ENCODE measurements at regions of chr12 and their contacts with region 1.

Region 1: DNA sequence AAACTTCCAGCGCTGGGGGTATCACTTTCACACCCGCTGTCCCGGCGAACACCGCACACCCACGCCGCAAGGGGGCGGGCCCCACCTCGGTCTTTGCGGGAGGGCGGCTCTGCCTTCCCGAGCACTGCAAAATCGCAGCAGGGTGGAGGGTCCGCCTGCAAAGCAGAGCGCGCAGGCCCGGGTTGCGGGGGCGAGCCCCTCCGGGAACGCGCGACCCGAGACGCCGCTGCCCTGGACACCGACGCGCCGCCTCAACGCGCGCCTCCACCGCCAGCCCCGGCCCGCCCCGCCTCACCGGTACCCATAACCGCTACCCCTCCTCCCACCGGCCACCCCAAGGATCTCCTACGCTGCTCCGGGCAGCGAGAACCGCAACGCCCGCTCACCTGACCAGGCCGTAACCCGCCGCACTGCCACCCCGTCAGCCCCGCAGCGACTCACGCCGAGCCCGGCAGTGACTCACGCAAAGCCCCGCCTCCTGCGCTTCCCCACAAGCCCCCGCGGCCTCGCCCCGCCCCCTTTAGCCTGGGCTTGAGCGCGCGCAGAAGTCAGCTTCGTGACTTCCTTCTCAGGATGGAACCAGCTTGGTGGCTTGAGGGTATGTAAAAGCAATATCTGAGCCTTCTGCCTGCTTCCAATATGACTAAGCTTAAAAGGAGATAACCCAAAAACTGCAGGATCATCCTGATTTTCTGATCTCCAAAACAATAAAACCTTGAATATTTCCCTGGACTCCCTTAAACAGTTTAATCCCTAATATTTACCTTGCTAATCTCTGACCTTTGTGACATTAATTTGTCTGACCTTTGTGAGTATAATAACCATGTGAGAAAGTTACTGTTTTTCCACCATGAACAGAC is at the start of gene RPAP3:
- DNase-seq: peak; percentile 95
- ATAC-seq: peak; percentile 90
- H3K4me3 ChIP-seq: peak within 1 kb of the TSS; percentile 62 to 98 (median 83)
- H3K4me3 Mint-ChIP-seq: peak within 1 kb of the TSS; percentile 93
- H3K27ac ChIP-seq: peak within 1 kb of the TSS; percentile 88
- H3K27ac Mint-ChIP-seq: peak within 1 kb of the TSS; percentile 94
- H3K4me1 ChIP-seq: peaks cover 59 to 61% of the 10 kb centered on the region in 2 donors
- H3K4me1 Mint-ChIP-seq: peaks cover 71% of the 10 kb centered on the region
- H3K27me3 ChIP-seq: no peaks in the 10 kb centered on the region
- H3K27me3 Mint-ChIP-seq: no peaks in the 10 kb centered on the region
- CTCF ChIP-seq: peak; percentile 81
- total RNA-seq, gene RPAP3: 47.2 and 49.4 TPM in 2 replicates

Region 2: GRCh38 chr12:46372544-46373110 is 1333.2 kb before region 1 on chr12 and contains the start of gene SLC38A2:
- CTCF ChIA-PET with region 1: no interaction called
- POLR2A ChIA-PET with region 1: no interaction called
- intact Hi-C with region 1: loop called (anchors 5 kb)
- DNase-seq: peak; percentile 97
- ATAC-seq: peak; percentile 84
- H3K4me3 ChIP-seq: peak within 1 kb of the TSS; percentile 80 to 99 (median 97)
- H3K4me3 Mint-ChIP-seq: peak within 1 kb of the TSS; percentile 98
- H3K27ac ChIP-seq: peak within 1 kb of the TSS; percentile 90 to 91
- H3K27ac Mint-ChIP-seq: peak within 1 kb of the TSS; percentile 99
- H3K4me1 ChIP-seq: peaks cover 39 to 40% of the 10 kb centered on the region in 2 donors
- H3K4me1 Mint-ChIP-seq: peaks cover 45% of the 10 kb centered on the region
- H3K27me3 ChIP-seq: no peaks in the 10 kb centered on the region
- H3K27me3 Mint-ChIP-seq: no peaks in the 10 kb centered on the region
- CTCF ChIP-seq: no peak
- total RNA-seq, gene SLC38A2: 202 TPM in 2 replicates

Region 3: GRCh38 chr12:47367912-47368537 is 337.8 kb before region 1 on chr12:
- CTCF ChIA-PET with region 1: no interaction called
- POLR2A ChIA-PET with region 1: no interaction called
- intact Hi-C with region 1: no loop called
- DNase-seq: no peak
- ATAC-seq: no peak
- H3K4me3 ChIP-seq: peak overlapping the region in 1 of 5 experiments; percentile 5
- H3K4me3 Mint-ChIP-seq: no peak overlapping the region
- H3K27ac ChIP-seq: peak overlapping the region; percentile 7 to 50
- H3K27ac Mint-ChIP-seq: no peak overlapping the region
- H3K4me1 ChIP-seq: peaks cover 38 to 39% of the 10 kb centered on the region in 2 donors
- H3K4me1 Mint-ChIP-seq: peaks cover 8% of the 10 kb centered on the region
- H3K27me3 ChIP-seq: no peaks in the 10 kb centered on the region
- H3K27me3 Mint-ChIP-seq: no peaks in the 10 kb centered on the region
- CTCF ChIP-seq: no peak

Region 4: DNA sequence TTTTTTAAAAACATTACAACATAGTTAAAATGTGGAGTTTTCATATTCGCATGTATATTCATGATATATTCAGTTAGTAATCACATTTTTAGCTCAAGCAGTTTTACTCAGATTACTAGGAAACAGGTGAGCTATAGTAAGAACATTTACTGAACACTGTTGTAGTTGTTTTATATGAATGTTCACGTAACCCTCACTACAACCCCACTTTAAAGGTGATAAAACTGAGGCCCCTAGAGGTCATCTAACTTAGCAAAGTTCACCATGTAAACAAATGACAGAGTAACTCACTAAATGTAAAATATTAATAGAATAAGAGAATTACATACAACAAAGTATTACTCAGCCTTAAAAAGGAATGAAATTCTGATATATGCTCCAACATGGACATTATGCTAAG is 26.0 kb before region 1 on chr12:
- CTCF ChIA-PET with region 1: no interaction called
- POLR2A ChIA-PET with region 1: no interaction called
- intact Hi-C with region 1: no loop called
- DNase-seq: no peak
- ATAC-seq: no peak
- H3K4me3 ChIP-seq: no peak overlapping the region
- H3K4me3 Mint-ChIP-seq: no peak overlapping the region
- H3K27ac ChIP-seq: no peak overlapping the region
- H3K27ac Mint-ChIP-seq: no peak overlapping the region
- H3K4me1 ChIP-seq: no peaks in the 10 kb centered on the region
- H3K4me1 Mint-ChIP-seq: peaks cover 18% of the 10 kb centered on the region
- H3K27me3 ChIP-seq: no peaks in the 10 kb centered on the region
- H3K27me3 Mint-ChIP-seq: no peaks in the 10 kb centered on the region
- CTCF ChIP-seq: no peak

Region 5: GRCh38 chr12:47742253-47742825 is 36.5 kb after region 1 on chr12:
- CTCF ChIA-PET with region 1: interaction called, 270 read pairs
- POLR2A ChIA-PET with region 1: interaction called, 3 read pairs
- intact Hi-C with region 1: loop called (anchors 1 kb)
- DNase-seq: peak; percentile 78
- ATAC-seq: peak; percentile 18
- H3K4me3 ChIP-seq: no peak overlapping the region
- H3K4me3 Mint-ChIP-seq: no peak overlapping the region
- H3K27ac ChIP-seq: no peak overlapping the region
- H3K27ac Mint-ChIP-seq: peak overlapping the region; percentile 75
- H3K4me1 ChIP-seq: peaks cover 43 to 61% of the 10 kb centered on the region in 2 donors
- H3K4me1 Mint-ChIP-seq: peaks cover 65% of the 10 kb centered on the region
- H3K27me3 ChIP-seq: no peaks in the 10 kb centered on the region
- H3K27me3 Mint-ChIP-seq: no peaks in the 10 kb centered on the region
- CTCF ChIP-seq: peak; percentile 98

Region 6: DNA sequence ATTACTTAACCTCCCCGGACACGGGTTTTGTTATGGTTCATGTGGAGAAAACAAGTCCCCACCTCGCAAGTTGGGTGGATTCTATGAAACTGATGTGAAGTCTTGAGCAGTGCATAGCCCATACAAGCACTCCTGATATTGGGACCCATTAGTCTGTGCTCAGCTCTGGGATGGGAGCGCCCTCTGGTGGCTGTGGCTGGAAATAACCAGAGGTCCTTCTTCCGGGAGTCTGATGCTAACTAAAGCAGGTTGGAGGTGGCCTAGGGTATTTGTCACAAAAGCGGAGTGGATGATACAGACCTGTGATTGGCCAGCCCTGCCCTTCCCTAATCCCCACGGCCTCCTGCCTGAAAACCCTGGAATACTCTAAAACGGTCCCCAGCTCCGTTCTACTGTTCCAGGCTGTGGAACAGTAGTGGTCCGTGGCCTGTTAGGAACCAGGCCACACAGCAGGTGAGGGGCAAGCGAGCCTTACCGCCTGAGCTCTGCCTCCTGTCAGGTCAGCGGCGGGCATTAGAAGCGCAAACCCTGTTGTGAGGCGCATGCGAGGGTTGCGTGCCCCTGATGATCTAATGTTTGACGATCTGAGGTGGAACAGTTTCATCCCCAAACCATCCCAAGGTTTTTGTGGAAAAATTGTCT is 73.6 kb after region 1 on chr12:
- CTCF ChIA-PET with region 1: interaction called, 584 read pairs
- POLR2A ChIA-PET with region 1: no interaction called
- intact Hi-C with region 1: no loop called
- DNase-seq: peak; percentile 90
- ATAC-seq: peak; percentile 90
- H3K4me3 ChIP-seq: no peak overlapping the region
- H3K4me3 Mint-ChIP-seq: no peak overlapping the region
- H3K27ac ChIP-seq: no peak overlapping the region
- H3K27ac Mint-ChIP-seq: peak overlapping the region; percentile 80
- H3K4me1 ChIP-seq: peaks cover 0 to 14% of the 10 kb centered on the region in 2 donors
- H3K4me1 Mint-ChIP-seq: peaks cover 23% of the 10 kb centered on the region
- H3K27me3 ChIP-seq: no peaks in the 10 kb centered on the region
- H3K27me3 Mint-ChIP-seq: no peaks in the 10 kb centered on the region
- CTCF ChIP-seq: peak; percentile 92

Region 7: DNA sequence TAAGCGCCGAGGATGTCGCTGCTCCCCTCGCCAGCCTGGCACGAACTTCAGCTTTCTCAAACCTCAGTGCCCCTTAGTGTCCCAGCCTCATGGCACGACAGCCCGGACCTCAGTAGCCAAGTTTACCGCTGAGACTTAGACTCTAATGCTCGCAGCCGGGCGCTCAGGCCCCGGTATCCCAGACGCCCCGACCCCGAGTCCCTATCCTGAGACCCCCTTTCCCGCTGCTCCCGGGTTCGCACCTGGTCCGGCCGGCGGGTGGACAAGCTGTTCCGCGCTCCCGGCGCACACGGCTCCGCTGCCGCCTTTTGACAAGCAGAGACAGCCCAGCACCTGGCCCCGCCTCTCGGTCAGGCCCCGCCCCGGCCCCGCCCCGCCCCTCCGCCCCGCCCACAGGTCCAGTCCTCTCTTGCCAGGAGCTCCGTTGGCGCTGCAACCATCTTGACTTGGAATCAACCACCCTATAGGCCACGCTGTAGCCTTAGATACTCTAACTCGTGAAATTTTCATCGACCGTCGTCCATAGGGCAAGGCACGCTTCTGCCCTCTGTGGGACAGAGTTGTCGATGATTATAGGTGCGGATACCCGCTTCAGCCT is 199.0 kb after region 1 on chr12 and contains the start of gene VDR:
- CTCF ChIA-PET with region 1: no interaction called
- POLR2A ChIA-PET with region 1: no interaction called
- intact Hi-C with region 1: loop called (anchors 5 kb)
- DNase-seq: peak; percentile 77
- ATAC-seq: peak; percentile 85
- H3K4me3 ChIP-seq: peak within 1 kb of the TSS; percentile 55 to 82 (median 64)
- H3K4me3 Mint-ChIP-seq: peak within 1 kb of the TSS; percentile 90
- H3K27ac ChIP-seq: peak within 1 kb of the TSS in 1 of 2 donors; percentile 6
- H3K27ac Mint-ChIP-seq: peak within 1 kb of the TSS; percentile 54
- H3K4me1 ChIP-seq: peaks cover 26 to 34% of the 10 kb centered on the region in 2 donors
- H3K4me1 Mint-ChIP-seq: peaks cover 36% of the 10 kb centered on the region
- H3K27me3 ChIP-seq: peaks cover 0 to 57% (median 21%) of the 10 kb centered on the region in 4 experiments
- H3K27me3 Mint-ChIP-seq: peaks cover 26% of the 10 kb centered on the region
- CTCF ChIP-seq: no peak
- total RNA-seq, gene VDR: 0.37 and 0.53 TPM in 2 replicates

Region 8: DNA sequence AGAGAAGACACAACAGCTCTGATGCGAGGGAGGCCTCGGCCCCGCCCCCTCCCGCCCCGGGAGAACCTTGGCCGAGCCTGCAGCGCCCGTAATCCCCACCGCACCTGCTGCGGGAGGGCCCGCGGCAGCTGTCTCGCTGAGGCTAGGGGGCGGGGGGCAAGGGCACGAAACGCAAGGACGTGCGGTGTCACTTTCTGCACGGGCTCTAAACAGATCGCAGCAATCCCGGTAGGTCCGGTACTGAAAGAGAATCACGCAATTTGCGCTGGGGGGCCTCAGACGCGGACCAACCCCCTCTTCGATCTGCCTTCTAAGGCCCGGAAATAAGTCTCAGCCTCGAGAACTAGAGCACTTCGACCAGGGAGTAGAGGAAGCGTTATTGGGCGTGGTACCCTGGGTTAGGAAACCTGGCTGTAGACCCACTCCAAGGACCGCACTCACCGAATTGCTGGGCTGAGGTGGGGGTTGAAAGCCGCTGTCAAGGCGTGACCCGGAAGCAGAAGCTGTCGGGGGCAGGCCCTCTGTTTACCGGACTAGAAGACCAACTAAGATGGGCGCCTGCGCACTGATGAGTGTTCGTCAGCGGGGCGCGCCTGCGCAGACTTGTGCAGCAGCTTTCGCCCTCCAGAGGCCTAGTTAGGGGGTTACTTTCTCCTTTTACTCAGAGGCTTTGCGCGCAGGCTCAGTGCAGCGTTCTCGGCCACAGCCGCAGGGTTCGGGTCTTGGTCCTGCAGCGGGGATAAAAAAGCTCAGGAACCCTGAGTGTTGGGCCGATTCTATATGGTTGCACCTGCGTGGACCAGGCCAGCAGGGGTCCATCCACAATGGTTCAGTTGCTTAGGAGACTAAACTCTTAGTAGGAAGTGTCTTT is 451.5 kb after region 1 on chr12 and contains the start of gene ASB8:
- CTCF ChIA-PET with region 1: interaction called, 4 read pairs
- POLR2A ChIA-PET with region 1: no interaction called
- intact Hi-C with region 1: loop called (anchors 2 kb)
- DNase-seq: peak; percentile 99
- ATAC-seq: peak; percentile 91
- H3K4me3 ChIP-seq: peak within 1 kb of the TSS; percentile 81 to 98 (median 88)
- H3K4me3 Mint-ChIP-seq: peak within 1 kb of the TSS; percentile 99
- H3K27ac ChIP-seq: peak within 1 kb of the TSS; percentile 67 to 84
- H3K27ac Mint-ChIP-seq: peak within 1 kb of the TSS; percentile 99
- H3K4me1 ChIP-seq: peaks cover 14 to 15% of the 10 kb centered on the region in 2 donors
- H3K4me1 Mint-ChIP-seq: peaks cover 21% of the 10 kb centered on the region
- H3K27me3 ChIP-seq: no peaks in the 10 kb centered on the region
- H3K27me3 Mint-ChIP-seq: no peaks in the 10 kb centered on the region
- CTCF ChIP-seq: peak; percentile 64
- total RNA-seq, gene ASB8: 53.2 and 54.8 TPM in 2 replicates